Common myeloid progenitor, CD34-positive (primary cell): ENCODE measurements at regions of chr4 and their contacts with region 1.

Region 1: DNA sequence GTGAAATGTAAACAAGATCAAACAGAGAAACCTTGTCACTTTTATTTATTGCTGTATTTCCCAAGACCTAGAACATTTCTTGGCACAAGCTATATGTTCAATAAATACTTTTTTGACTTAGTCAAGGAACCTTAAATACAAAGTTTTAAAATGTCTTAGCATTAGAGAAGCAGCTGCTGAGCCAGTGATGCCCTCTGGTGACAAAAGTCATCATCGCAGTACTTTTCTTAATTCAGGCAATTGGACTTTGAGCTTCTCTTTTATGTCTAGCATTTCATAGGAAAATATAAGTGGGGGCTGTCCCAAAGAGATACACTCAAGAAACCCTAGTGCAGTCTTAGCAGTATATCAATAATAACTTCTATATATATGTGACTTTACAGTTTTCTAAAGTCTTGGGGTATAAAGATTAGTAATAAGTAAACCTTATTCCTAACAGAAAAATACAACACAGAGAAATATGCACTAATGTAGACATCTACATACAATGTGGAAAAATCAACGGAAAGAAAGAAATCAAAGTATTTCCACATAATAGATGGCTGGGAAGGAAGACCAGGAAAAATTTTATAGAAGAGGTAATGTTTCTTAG is 118.4 kb downstream of the DTHD1 start:
- DNase-seq: peak; percentile 46 to 69 (median 56)
- H3K4me3 ChIP-seq: no peak overlapping the region
- H3K27ac ChIP-seq: no peak overlapping the region
- H3K4me1 ChIP-seq: no peaks in the 10 kb centered on the region
- H3K27me3 ChIP-seq: peaks cover 0 to 2% (median 0%) of the 10 kb centered on the region in 5 experiments

Region 2: GRCh38 chr4:36255577-36255976 is 144.3 kb before region 1 on chr4:
- CTCF ChIA-PET with region 1: interaction called, 16 read pairs
- POLR2A ChIA-PET with region 1: no interaction called
- DNase-seq: peak in 2 of 3 donors; percentile 58 to 73
- H3K4me3 ChIP-seq: no peak overlapping the region
- H3K27ac ChIP-seq: no peak overlapping the region
- H3K4me1 ChIP-seq: peaks cover 5 to 15% (median 10%) of the 10 kb centered on the region in 4 experiments
- H3K27me3 ChIP-seq: no peaks in the 10 kb centered on the region

Region 3: GRCh38 chr4:36351082-36351666 is 48.7 kb before region 1 on chr4:
- CTCF ChIA-PET with region 1: interaction called, 36 read pairs
- POLR2A ChIA-PET with region 1: no interaction called
- DNase-seq: peak; percentile 69 to 84 (median 79)
- H3K4me3 ChIP-seq: no peak overlapping the region
- H3K27ac ChIP-seq: no peak overlapping the region
- H3K4me1 ChIP-seq: peaks cover 0 to 7% (median 3%) of the 10 kb centered on the region in 4 experiments
- H3K27me3 ChIP-seq: no peaks in the 10 kb centered on the region